ENCODE measurements at regions of chr10 and their contacts with region 1.

Region 1: DNA sequence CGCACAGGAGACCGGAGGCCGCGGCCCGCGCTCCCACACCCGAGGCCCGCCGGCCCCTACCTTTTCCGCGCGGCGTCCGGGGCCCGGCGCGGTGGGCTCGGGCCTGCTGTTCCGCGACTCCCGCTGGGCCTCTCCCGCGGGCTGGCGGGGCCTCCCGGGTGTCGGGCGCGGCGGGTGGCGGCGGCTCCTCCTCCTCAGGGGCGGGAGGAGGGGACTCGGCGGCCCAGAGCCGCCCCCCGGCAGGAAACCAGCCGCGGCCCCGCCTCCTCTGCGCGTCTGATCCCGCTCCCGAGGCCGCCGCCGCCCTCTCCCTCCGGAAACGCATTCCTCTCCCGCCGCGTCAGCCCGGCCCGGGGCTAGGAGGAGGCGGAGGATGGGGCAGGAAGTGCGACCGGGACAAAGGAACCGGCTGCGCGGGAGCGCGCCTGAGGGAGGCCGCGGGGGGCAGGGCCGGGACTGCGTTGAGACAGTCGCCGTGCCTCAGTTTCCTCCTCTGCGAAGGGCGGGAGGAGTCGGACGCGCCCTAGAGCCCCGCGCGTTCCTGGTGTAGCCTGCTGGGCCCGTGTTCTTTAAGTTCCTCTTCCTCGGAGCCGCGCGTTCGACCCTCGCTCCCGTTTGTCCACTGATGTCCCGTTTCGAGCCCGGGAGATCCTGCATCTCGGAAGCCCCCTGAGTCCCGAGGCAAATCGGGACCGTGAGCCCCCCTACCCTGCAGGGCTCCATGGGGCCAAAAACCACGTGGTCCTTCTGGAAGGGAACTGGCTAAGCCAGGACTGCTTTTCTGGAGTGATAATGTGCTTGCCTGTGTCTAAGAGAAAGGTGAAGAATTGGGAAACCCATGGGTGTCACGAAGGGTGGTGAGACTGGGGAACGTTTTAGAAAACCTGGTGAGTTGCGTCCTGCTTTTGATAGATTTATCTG is at the start of gene ITGB1:
- DNase-seq: peak; percentile 68 to 92 (median 80)
- ATAC-seq: peak; percentile 89
- H3K4me3 ChIP-seq: peak within 1 kb of the TSS; percentile 93
- H3K4me3 Mint-ChIP-seq: peak within 1 kb of the TSS; percentile 90
- H3K27ac ChIP-seq: peak within 1 kb of the TSS; percentile 60 to 67
- H3K27ac Mint-ChIP-seq: peak within 1 kb of the TSS; percentile 89
- H3K4me1 ChIP-seq: peaks cover 29% of the 10 kb centered on the region
- H3K4me1 Mint-ChIP-seq: peaks cover 54% of the 10 kb centered on the region
- H3K27me3 ChIP-seq: no peaks in the 10 kb centered on the region
- H3K27me3 Mint-ChIP-seq: no peaks in the 10 kb centered on the region
- CTCF ChIP-seq: no peak
- total RNA-seq, gene ITGB1: 82.4 to 82.9 TPM

Region 2: DNA sequence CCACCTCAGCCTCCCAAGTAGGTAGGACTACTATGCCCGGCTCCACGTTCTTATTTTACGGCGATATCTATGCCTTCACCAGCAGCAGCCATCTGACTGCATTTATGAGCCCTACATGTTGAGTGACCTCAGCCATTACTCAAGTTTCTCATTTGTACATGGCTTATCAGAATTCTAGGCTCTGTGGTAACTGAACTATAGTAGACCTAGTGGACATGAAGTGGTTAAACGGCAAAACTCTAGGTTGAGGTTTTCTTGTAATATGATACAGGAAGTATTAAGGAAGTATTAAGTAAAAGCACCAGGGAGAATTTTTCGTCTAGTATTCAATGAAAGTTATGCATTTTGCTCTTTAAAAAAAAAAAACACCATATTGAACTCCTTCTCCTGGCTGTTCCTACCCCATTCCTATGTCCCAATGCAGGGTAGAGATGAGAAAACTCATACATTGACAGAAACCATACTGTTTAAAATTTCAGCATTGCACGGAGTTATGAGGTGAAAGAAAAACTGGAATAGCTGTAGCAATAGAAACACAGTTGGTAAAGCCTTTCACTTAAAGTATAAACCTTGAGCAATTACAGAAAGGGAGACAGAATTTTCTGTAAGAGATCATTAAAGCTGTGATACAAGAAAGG is 571.6 kb before region 1 on chr10:
- CTCF ChIA-PET with region 1: no interaction called
- POLR2A ChIA-PET with region 1: no interaction called
- intact Hi-C with region 1: loop called in 1 of 2 experiments (anchors 10 kb)
- DNase-seq: no peak
- ATAC-seq: no peak
- H3K4me3 ChIP-seq: no peak overlapping the region
- H3K4me3 Mint-ChIP-seq: peak overlapping the region; percentile 0
- H3K27ac ChIP-seq: no peak overlapping the region
- H3K27ac Mint-ChIP-seq: no peak overlapping the region
- H3K4me1 ChIP-seq: peaks cover 8% of the 10 kb centered on the region
- H3K4me1 Mint-ChIP-seq: peaks cover 10% of the 10 kb centered on the region
- H3K27me3 ChIP-seq: no peaks in the 10 kb centered on the region
- H3K27me3 Mint-ChIP-seq: no peaks in the 10 kb centered on the region
- CTCF ChIP-seq: no peak

Region 3: DNA sequence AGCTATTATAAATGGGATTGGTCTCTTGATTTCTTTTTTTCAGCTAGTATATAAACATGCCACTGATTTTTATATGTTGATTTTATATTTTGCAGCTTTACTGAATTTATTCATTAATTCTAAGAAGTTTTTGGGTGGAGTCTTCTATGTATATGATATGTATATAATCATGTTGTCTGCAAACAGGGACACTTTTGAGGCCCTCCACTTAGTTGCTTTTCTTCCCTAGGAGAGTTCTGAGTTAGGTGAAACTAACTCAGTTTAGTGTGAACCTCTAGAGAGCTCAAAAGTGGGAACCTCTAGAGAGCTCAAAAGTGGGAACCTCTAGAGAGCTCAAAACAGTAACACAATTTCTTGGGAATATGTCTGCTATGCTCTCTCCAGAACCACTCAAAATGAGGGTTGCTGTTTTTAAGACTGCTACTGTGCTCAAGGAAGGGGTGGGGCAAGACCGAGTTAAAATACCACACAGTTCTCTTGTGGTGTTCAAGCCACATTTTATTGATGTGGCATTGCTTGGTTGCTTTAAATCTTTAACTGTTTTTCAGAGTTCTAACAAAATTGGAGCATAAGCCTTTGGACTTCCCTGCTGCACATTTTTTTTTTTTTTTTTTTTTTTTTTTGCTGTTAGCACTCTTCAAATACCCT is 499.2 kb before region 1 on chr10:
- CTCF ChIA-PET with region 1: no interaction called
- POLR2A ChIA-PET with region 1: no interaction called
- intact Hi-C with region 1: loop called in 1 of 2 experiments (anchors 5 kb)
- DNase-seq: peak in 13 of 14 experiments; percentile 23 to 90 (median 43)
- ATAC-seq: peak; percentile 99
- H3K4me3 ChIP-seq: peak overlapping the region; percentile 9
- H3K4me3 Mint-ChIP-seq: peak overlapping the region; percentile 85
- H3K27ac ChIP-seq: no peak overlapping the region
- H3K27ac Mint-ChIP-seq: peak overlapping the region; percentile 95
- H3K4me1 ChIP-seq: peaks cover 11% of the 10 kb centered on the region
- H3K4me1 Mint-ChIP-seq: peaks cover 60% of the 10 kb centered on the region
- H3K27me3 ChIP-seq: no peaks in the 10 kb centered on the region
- H3K27me3 Mint-ChIP-seq: no peaks in the 10 kb centered on the region
- CTCF ChIP-seq: no peak

Region 4: GRCh38 chr10:32938554-32939061 is 19.7 kb before region 1 on chr10:
- CTCF ChIA-PET with region 1: interaction called, 4 read pairs
- POLR2A ChIA-PET with region 1: interaction called, 6 read pairs
- intact Hi-C with region 1: loop called in 1 of 2 experiments (anchors 2 kb)
- DNase-seq: no peak
- ATAC-seq: peak; percentile 24
- H3K4me3 ChIP-seq: no peak overlapping the region
- H3K4me3 Mint-ChIP-seq: peak overlapping the region; percentile 40
- H3K27ac ChIP-seq: no peak overlapping the region
- H3K27ac Mint-ChIP-seq: peak overlapping the region; percentile 36
- H3K4me1 ChIP-seq: peaks cover 46% of the 10 kb centered on the region
- H3K4me1 Mint-ChIP-seq: peaks cover 57% of the 10 kb centered on the region
- H3K27me3 ChIP-seq: no peaks in the 10 kb centered on the region
- H3K27me3 Mint-ChIP-seq: no peaks in the 10 kb centered on the region
- CTCF ChIP-seq: no peak

Region 5: GRCh38 chr10:32980558-32981468 is 22.5 kb after region 1 on chr10:
- CTCF ChIA-PET with region 1: interaction called, 3 read pairs
- POLR2A ChIA-PET with region 1: interaction called, 12 read pairs
- intact Hi-C with region 1: loop called (anchors 2 kb)
- DNase-seq: peak; percentile 71 to 93 (median 80)
- ATAC-seq: peak; percentile 96
- H3K4me3 ChIP-seq: peak overlapping the region; percentile 77
- H3K4me3 Mint-ChIP-seq: peak overlapping the region; percentile 92
- H3K27ac ChIP-seq: peak overlapping the region; percentile 70 to 90
- H3K27ac Mint-ChIP-seq: peak overlapping the region; percentile 92
- H3K4me1 ChIP-seq: peaks cover 28% of the 10 kb centered on the region
- H3K4me1 Mint-ChIP-seq: peaks cover 23% of the 10 kb centered on the region
- H3K27me3 ChIP-seq: no peaks in the 10 kb centered on the region
- H3K27me3 Mint-ChIP-seq: no peaks in the 10 kb centered on the region
- CTCF ChIP-seq: no peak

Region 6: GRCh38 chr10:33134011-33134751 is 175.8 kb after region 1 on chr10:
- CTCF ChIA-PET with region 1: no interaction called
- POLR2A ChIA-PET with region 1: interaction called, 3 read pairs
- intact Hi-C with region 1: loop called in 1 of 2 experiments (anchors 5 kb)
- DNase-seq: peak in 13 of 14 experiments; percentile 49 to 90 (median 65)
- ATAC-seq: peak; percentile 67
- H3K4me3 ChIP-seq: no peak overlapping the region
- H3K4me3 Mint-ChIP-seq: peak overlapping the region; percentile 62
- H3K27ac ChIP-seq: peak overlapping the region; percentile 42 to 70
- H3K27ac Mint-ChIP-seq: peak overlapping the region; percentile 93
- H3K4me1 ChIP-seq: peaks cover 91% of the 10 kb centered on the region
- H3K4me1 Mint-ChIP-seq: peaks cover 88% of the 10 kb centered on the region
- H3K27me3 ChIP-seq: no peaks in the 10 kb centered on the region
- H3K27me3 Mint-ChIP-seq: no peaks in the 10 kb centered on the region
- CTCF ChIP-seq: no peak

Measured in CD4-positive, alpha-beta T cell (primary cell).